Mucosa of descending colon (tissue), 3 donors: ENCODE measurements at regions of chr16 and their contacts with region 1.

Region 1: GRCh38 chr16:67474551-67475455 is 6.2 kb downstream of the ATP6V0D1 start:
- DNase-seq: peak in 2 of 3 donors; percentile 51
- ATAC-seq: peak; percentile 60
- H3K4me3 ChIP-seq: no peak overlapping the region
- H3K4me1 ChIP-seq: peaks cover 22% of the 10 kb centered on the region
- CTCF ChIP-seq: no peak

Region 2: GRCh38 chr16:67246934-67247697 is 227.7 kb before region 1 on chr16 and contains the start of gene FHOD1:
- intact Hi-C with region 1: loop called in 1 of 2 experiments (anchors 5 kb)
- DNase-seq: peak; percentile 99 to 100 (median 99)
- ATAC-seq: peak; percentile 84
- H3K4me3 ChIP-seq: peak within 1 kb of the TSS; percentile 72
- H3K4me1 ChIP-seq: peaks cover 52% of the 10 kb centered on the region
- CTCF ChIP-seq: peak; percentile 15
- total RNA-seq, gene FHOD1: 30.7 to 36.5 (median 34.1) TPM

Region 3: DNA sequence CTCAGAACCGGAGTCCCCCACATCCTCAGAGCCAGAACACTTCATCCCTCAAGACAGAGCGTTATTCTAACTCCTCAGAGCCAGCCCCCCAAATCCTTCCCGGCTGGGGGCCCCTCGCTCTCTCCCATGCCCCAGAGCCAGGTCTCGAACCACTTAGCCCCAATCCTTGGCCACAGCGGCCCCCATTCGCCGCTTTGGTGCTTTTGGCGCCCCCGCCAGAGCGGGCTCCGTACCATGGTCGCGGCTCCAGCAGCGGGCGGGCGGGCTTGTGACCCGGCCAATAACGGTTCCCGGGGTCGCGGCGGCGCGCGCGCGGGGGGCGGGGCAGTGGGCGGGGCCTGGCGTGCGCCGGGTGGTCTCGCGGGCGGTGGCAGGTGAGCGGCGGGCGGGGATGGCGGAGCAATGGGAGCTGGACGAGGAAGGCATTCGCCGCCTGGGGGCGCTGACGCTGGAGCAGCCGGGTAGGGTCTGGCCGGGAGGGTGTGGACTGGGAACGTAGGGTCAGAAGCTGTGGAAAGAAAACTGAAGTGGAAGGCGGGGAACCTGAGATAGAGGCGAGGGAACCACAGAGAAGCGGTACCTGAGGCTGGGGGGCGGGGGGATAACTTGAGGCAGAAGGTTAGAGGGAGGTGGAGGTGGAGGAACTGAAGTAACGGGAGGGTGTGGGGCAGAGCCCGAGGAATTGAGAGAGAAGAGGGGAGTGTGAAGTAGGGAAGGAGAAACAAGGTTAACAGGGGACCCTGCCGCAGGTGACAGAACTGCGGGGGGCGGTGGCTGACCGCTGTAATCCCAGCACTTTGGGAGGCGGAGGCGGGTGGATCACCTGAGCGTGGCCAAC is 148.1 kb before region 1 on chr16 and contains the starts of genes KCTD19 and LRRC36:
- intact Hi-C with region 1: no loop called
- DNase-seq: peak; percentile 75 to 86 (median 85)
- ATAC-seq: peak; percentile 96
- H3K4me3 ChIP-seq: no peak within 1 kb of the TSS
- H3K4me1 ChIP-seq: peaks cover 8% of the 10 kb centered on the region
- CTCF ChIP-seq: peak; percentile 26
- total RNA-seq, gene KCTD19: 0.05 TPM in 1 of 3 donors, not detected in the others
- total RNA-seq, gene LRRC36: 0.90 to 1.5 TPM in 2 of 3 donors, not detected in the other

Region 4: DNA sequence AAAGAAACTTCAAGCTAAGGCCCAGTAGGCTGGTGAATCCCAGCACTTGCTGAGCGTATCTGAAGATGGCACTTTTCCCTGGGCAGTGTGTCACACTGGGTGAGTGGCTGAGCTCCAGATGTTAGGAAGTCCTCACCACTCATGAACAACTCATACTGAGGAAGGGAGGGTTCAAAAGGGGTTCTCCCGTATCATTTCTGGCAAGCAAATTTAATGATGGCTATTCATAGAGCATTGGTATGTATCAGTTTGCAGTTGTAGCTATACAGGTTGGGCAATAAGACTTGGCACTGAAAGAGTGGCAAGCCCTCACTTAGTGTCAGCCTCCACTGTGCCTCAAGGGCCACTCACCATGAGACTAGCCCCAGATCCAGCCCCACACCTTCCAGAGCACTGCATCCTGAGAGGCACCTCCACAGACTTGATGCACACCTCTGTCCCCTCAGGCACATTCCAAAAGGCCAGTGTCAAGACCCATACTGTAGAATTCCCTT is 233.6 kb after region 1 on chr16:
- intact Hi-C with region 1: no loop called
- DNase-seq: no peak
- ATAC-seq: no peak
- H3K4me3 ChIP-seq: no peak overlapping the region
- H3K4me1 ChIP-seq: peaks cover 4% of the 10 kb centered on the region
- CTCF ChIP-seq: no peak